ENCODE measurements at regions of chr12 and their contacts with region 1.

Region 1: GRCh38 chr12:48640854-48641253 is 41.2 kb downstream of the KANSL2 start:
- DNase-seq: no peak
- H3K4me3 Mint-ChIP-seq: no peak overlapping the region
- H3K27ac Mint-ChIP-seq: no peak overlapping the region
- H3K4me1 Mint-ChIP-seq: no peaks in the 10 kb centered on the region
- H3K27me3 Mint-ChIP-seq: no peaks in the 10 kb centered on the region
- CTCF ChIP-seq: no peak

Region 2: GRCh38 chr12:49667325-49668090 is 1026.7 kb after region 1 on chr12:
- CTCF ChIA-PET with region 1: interaction called, 13 read pairs
- intact Hi-C with region 1: no loop called
- DNase-seq: no peak
- H3K4me3 Mint-ChIP-seq: no peak overlapping the region
- H3K27ac Mint-ChIP-seq: no peak overlapping the region
- H3K4me1 Mint-ChIP-seq: no peaks in the 10 kb centered on the region
- H3K27me3 Mint-ChIP-seq: no peaks in the 10 kb centered on the region
- CTCF ChIP-seq: no peak

Measured in Calu3 (cell line).